Right cardiac atrium (tissue), 5 donors: ENCODE measurements at regions of chr1 and their contacts with region 1.

Region 1: GRCh38 chr1:179190861-179191260 is 38.6 kb downstream of the ABL2 start:
- DNase-seq: peak in 2 of 3 donors; percentile 24 to 52
- ATAC-seq: peak; percentile 83 to 95
- H3K4me3 ChIP-seq: no peak overlapping the region
- H3K27ac ChIP-seq: no peak overlapping the region
- H3K4me1 ChIP-seq: no peaks in the 10 kb centered on the region
- H3K27me3 ChIP-seq: no peaks in the 10 kb centered on the region

Region 2: GRCh38 chr1:179081687-179082332 is 109.1 kb before region 1 on chr1 and contains the start of gene TOR3A:
- intact Hi-C with region 1: loop called in 1 of 4 experiments (anchors 10 kb)
- DNase-seq: peak; percentile 93 to 97 (median 97)
- ATAC-seq: peak; percentile 98 to 99
- H3K4me3 ChIP-seq: peak within 1 kb of the TSS; percentile 60
- H3K27ac ChIP-seq: peak within 1 kb of the TSS; percentile 42
- H3K4me1 ChIP-seq: peaks cover 4% of the 10 kb centered on the region
- H3K27me3 ChIP-seq: no peaks in the 10 kb centered on the region
- total RNA-seq, gene TOR3A: 11.8 to 12.5 (median 11.9) TPM

Region 3: DNA sequence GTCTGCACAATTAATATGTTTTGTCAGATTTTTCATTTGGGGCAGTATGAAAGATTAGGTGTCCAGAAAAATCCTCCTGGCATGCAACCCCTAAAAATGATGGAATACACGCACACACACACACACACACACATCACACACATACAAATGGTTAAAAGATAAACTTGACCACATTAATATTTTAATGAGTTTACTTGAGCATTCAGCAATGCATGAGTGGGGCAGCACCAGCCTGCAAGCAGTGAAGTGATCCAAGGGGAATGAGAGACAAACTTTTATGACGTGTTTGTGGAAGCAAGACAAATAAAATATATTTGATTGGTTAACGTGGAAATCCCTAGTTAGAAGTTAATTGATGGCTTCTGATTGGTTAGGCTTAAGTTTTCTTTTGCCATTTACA is 73.6 kb after region 1 on chr1:
- intact Hi-C with region 1: no loop called
- DNase-seq: no peak
- ATAC-seq: no peak
- H3K4me3 ChIP-seq: no peak overlapping the region
- H3K27ac ChIP-seq: no peak overlapping the region
- H3K4me1 ChIP-seq: no peaks in the 10 kb centered on the region
- H3K27me3 ChIP-seq: no peaks in the 10 kb centered on the region